Activated naive CD4-positive, alpha-beta T cell treated with anti-CD3 and anti-CD28 coated beads for 36 hours (primary cell): ENCODE measurements at regions of chr20 and their contacts with region 1.

Region 1: DNA sequence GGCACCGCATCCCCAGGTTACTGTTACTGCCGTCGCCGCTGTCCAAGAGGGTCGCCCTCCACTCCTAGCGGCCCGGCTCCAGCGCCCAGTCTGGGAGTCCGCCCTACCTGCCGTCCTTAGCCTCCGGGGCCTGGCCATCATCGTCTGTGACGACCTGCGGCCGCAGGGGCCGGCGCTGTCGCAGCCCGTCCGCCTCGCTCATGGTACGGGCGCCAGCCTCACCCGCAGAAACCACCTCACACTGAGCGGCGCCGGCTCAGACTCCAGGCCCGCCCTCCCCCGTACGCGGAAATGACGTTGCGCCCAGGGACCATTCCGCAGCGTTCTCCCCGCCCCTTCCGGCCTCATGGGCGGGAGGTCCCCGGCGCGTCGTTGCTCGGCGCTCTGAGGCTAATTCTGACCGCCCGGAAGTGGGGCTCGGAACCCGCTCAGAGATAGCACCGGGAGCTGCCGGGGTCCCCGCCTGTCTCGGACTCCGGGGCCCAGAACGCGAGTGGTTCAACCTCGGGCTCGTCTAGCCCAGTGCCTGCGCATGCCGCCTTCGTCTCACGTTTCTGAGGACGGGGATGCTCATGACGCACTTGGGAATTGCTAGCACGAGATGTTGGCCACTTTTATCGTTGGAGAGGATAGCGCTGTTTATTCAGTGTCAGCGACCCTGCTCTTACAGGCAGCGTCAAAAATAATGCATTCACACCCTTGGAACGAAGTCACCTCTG is at the start of gene APMAP:
- DNase-seq: peak; percentile 97
- H3K4me3 Mint-ChIP-seq: peak within 1 kb of the TSS; percentile 89
- H3K27ac Mint-ChIP-seq: peak within 1 kb of the TSS; percentile 90
- H3K4me1 Mint-ChIP-seq: peaks cover 57% of the 10 kb centered on the region
- H3K27me3 Mint-ChIP-seq: no peaks in the 10 kb centered on the region
- total RNA-seq, gene APMAP: 46.9 to 50.9 TPM

Region 2: GRCh38 chr20:24781422-24781980 is 211.1 kb before region 1 on chr20:
- CTCF ChIA-PET with region 1: no interaction called
- intact Hi-C with region 1: no loop called
- DNase-seq: peak; percentile 60
- H3K4me3 Mint-ChIP-seq: no peak overlapping the region
- H3K27ac Mint-ChIP-seq: no peak overlapping the region
- H3K4me1 Mint-ChIP-seq: no peaks in the 10 kb centered on the region
- H3K27me3 Mint-ChIP-seq: peaks cover 11% of the 10 kb centered on the region

Region 3: DNA sequence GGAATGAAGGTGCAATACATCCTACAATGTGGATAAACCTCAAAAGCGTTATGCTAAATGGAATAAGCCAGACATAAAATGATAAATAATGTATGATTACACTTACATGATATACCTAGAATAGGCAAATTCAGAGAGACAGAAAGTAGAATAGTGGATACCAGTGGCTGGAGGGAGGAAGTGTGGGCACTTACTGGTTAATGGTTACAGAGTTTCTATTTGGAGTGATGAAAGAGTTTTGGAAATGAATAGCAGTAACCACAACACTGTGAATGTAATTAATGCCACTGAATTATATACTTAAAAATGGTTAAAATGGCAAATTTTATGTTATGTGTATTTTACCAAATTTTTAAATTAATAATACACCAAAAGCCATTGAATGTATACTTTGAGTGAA is 115.0 kb before region 1 on chr20:
- CTCF ChIA-PET with region 1: no interaction called
- intact Hi-C with region 1: no loop called
- DNase-seq: no peak
- H3K4me3 Mint-ChIP-seq: no peak overlapping the region
- H3K27ac Mint-ChIP-seq: no peak overlapping the region
- H3K4me1 Mint-ChIP-seq: no peaks in the 10 kb centered on the region
- H3K27me3 Mint-ChIP-seq: peaks cover 5% of the 10 kb centered on the region

Region 4: DNA sequence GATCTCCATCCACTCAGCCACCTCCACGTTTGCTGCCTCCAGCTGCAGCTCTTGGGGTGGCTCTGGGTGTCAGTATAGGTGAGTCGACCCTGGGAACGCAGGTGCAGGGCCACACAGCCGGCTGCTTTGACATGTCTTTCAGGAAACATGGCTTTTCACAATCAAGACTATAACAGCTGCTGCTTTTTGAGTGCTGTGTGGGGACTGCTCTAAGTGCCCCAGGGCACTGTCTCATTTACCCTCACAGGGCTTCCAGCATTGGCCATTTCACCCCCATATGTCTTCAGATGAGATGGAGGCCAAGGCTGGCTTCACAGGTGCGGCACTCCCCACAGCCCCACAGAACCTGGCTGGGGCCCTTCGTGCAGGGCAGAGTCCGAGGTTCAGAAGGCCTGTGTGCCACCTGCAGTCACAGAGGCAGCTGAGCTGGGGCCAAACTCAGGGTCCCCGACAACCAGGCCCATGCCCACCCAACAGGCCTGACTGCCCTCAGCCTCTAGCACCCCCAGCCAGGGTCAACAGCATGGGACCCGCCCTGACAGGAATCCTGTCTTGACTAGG is 58.5 kb before region 1 on chr20:
- CTCF ChIA-PET with region 1: interaction called, 13 read pairs
- intact Hi-C with region 1: loop called (anchors 1 kb)
- DNase-seq: no peak
- H3K4me3 Mint-ChIP-seq: no peak overlapping the region
- H3K27ac Mint-ChIP-seq: no peak overlapping the region
- H3K4me1 Mint-ChIP-seq: peaks cover 24% of the 10 kb centered on the region
- H3K27me3 Mint-ChIP-seq: no peaks in the 10 kb centered on the region

Region 5: DNA sequence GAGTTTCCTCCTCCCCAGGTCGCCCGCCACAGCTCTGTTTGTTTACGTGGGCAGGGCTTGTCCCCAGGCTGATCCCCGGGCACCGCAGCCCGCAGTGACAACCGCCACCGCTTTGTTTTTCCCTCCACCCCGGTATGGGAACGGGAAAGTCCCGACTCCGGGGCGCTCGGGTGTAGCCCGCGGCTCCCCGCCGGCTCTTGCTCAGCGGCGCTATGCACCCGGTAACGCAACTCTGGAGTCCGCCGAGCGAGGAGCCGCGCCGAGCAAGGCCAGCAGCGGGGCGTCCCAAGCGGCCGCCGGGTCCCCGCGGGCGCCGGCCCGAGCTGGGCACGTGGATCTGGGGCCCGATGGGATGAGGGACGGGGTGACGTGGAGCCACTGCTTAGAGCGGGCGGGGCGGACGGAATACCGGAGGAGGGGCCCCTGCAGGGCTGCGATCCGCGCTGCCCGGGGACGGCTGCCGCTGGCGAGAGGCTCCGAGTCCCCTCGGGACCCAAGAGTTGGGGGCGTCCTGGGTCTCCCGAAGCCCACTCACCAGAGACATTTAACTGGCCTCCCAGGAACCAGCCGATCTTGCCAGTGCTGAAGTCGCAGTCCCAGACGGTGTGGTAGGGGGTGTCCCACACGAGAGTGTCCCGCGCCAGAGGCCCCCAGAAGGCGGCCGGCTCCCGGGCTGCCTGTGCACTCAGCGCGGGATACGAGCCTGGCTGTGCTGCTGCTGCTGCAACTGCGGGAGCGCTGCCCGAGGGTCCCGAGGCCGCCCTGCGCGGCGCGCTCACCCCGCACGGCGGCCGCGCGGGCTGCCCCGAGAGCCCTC is 64.8 kb after region 1 on chr20:
- CTCF ChIA-PET with region 1: interaction called, 105 read pairs
- intact Hi-C with region 1: loop called (anchors 1 kb)
- DNase-seq: peak; percentile 88
- H3K4me3 Mint-ChIP-seq: peak overlapping the region; percentile 71
- H3K27ac Mint-ChIP-seq: peak overlapping the region; percentile 72
- H3K4me1 Mint-ChIP-seq: peaks cover 45% of the 10 kb centered on the region
- H3K27me3 Mint-ChIP-seq: no peaks in the 10 kb centered on the region

Region 6: GRCh38 chr20:25090492-25091429 is 98.1 kb after region 1 on chr20:
- CTCF ChIA-PET with region 1: interaction called, 17 read pairs
- intact Hi-C with region 1: loop called (anchors 1 kb)
- DNase-seq: peak; percentile 88
- H3K4me3 Mint-ChIP-seq: peak overlapping the region; percentile 41
- H3K27ac Mint-ChIP-seq: peak overlapping the region; percentile 44
- H3K4me1 Mint-ChIP-seq: peaks cover 28% of the 10 kb centered on the region
- H3K27me3 Mint-ChIP-seq: peaks cover 7% of the 10 kb centered on the region

Region 7: GRCh38 chr20:25247956-25248785 is 255.5 kb after region 1 on chr20 and contains the start of gene PYGB:
- CTCF ChIA-PET with region 1: interaction called, 6 read pairs
- intact Hi-C with region 1: loop called (anchors 1 kb)
- DNase-seq: peak; percentile 68
- H3K4me3 Mint-ChIP-seq: peak within 1 kb of the TSS; percentile 91
- H3K27ac Mint-ChIP-seq: peak within 1 kb of the TSS; percentile 82
- H3K4me1 Mint-ChIP-seq: peaks cover 57% of the 10 kb centered on the region
- H3K27me3 Mint-ChIP-seq: peaks cover 7% of the 10 kb centered on the region
- total RNA-seq, gene PYGB: 19.6 to 20.0 TPM

Region 8: DNA sequence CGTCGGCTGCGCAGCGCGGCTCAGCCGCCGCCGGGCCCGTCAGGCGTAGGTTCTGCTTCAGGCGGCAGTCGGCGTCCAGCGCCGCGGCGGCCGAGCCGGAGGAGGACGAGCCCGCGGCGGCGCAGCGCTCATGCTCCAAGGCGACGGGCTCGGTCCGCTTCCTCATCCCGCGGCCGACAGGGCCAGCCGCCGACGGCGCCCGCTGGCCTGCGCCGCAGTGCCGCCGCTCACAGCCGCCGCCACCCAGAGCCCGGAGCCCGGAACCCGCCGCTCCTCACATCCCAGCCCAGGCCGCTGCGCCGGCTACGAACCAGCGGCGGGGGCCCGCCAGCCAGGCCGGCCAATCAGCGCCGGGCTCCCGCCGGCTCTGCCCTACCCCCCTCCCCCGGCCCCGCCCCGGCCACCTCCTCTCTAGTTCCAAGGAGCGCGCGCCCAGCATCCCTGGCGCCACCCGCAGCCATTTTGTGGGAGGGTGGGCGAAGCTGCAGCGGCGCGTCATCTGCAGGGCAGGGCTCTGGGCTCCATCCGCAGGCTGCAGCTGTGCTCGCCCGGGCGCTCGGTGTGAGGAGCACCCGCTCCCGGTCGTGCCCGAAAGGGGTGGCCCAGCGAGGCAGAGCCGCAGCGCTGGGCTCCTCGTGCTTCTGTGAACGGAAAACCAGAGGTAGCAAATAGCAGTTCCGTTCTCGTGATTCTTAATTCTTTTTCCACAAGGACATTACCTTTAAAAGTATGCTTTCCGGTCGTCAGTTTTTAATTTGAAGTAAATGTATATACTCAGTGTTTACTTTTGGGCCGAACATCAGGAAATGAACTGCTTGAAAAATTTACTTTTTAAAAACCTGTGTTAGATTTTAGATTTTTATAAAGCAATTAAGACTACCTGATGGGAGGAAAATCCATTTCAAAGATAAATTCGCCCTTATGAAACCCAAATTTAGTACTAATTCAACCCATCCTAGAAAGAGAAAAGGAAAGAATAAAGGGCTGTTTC is 398.2 kb after region 1 on chr20 and contains the start of gene ABHD12:
- CTCF ChIA-PET with region 1: no interaction called
- intact Hi-C with region 1: loop called (anchors 2 kb)
- DNase-seq: peak; percentile 97
- H3K4me3 Mint-ChIP-seq: peak within 1 kb of the TSS; percentile 87
- H3K27ac Mint-ChIP-seq: peak within 1 kb of the TSS; percentile 81
- H3K4me1 Mint-ChIP-seq: peaks cover 11% of the 10 kb centered on the region
- H3K27me3 Mint-ChIP-seq: no peaks in the 10 kb centered on the region
- total RNA-seq, gene ABHD12: 13.0 to 14.7 TPM

Region 9: GRCh38 chr20:25623736-25624499 is 631.3 kb after region 1 on chr20 and contains the start of gene NANP:
- CTCF ChIA-PET with region 1: no interaction called
- intact Hi-C with region 1: loop called (anchors 5 kb)
- DNase-seq: peak; percentile 96
- H3K4me3 Mint-ChIP-seq: peak within 1 kb of the TSS; percentile 91
- H3K27ac Mint-ChIP-seq: peak within 1 kb of the TSS; percentile 95
- H3K4me1 Mint-ChIP-seq: peaks cover 18% of the 10 kb centered on the region
- H3K27me3 Mint-ChIP-seq: no peaks in the 10 kb centered on the region
- total RNA-seq, gene NANP: 6.4 to 6.9 TPM